Activated CD4-positive, alpha-beta T cell treated with anti-CD3 and anti-CD28 coated beads, Interleukin-2, amount 10 ng/mL, durations not matched to agents 24 days and 14 days (primary cell): ENCODE measurements at regions of chr17 and their contacts with region 1.

Region 1: GRCh38 chr17:61389670-61390478 is 9.8 kb upstream of the TBX2 start:
- DNase-seq: peak; percentile 84
- H3K4me3 Mint-ChIP-seq: no peak overlapping the region
- H3K27ac Mint-ChIP-seq: no peak overlapping the region
- H3K4me1 Mint-ChIP-seq: no peaks in the 10 kb centered on the region
- H3K27me3 Mint-ChIP-seq: peaks cover 12% of the 10 kb centered on the region

Region 2: GRCh38 chr17:60720763-60721531 is 668.9 kb before region 1 on chr17:
- intact Hi-C with region 1: loop called (anchors 1 kb)
- DNase-seq: peak; percentile 82
- H3K4me3 Mint-ChIP-seq: no peak overlapping the region
- H3K27ac Mint-ChIP-seq: no peak overlapping the region
- H3K4me1 Mint-ChIP-seq: no peaks in the 10 kb centered on the region
- H3K27me3 Mint-ChIP-seq: peaks cover 5% of the 10 kb centered on the region

Region 3: GRCh38 chr17:60971515-60972369 is 418.1 kb before region 1 on chr17:
- intact Hi-C with region 1: loop called (anchors 5 kb)
- DNase-seq: peak; percentile 79
- H3K4me3 Mint-ChIP-seq: no peak overlapping the region
- H3K27ac Mint-ChIP-seq: no peak overlapping the region
- H3K4me1 Mint-ChIP-seq: no peaks in the 10 kb centered on the region
- H3K27me3 Mint-ChIP-seq: peaks cover 10% of the 10 kb centered on the region

Region 4: GRCh38 chr17:61002316-61002736 is 387.5 kb before region 1 on chr17:
- intact Hi-C with region 1: loop called (anchors 2 kb)
- DNase-seq: no peak
- H3K4me3 Mint-ChIP-seq: no peak overlapping the region
- H3K27ac Mint-ChIP-seq: no peak overlapping the region
- H3K4me1 Mint-ChIP-seq: no peaks in the 10 kb centered on the region
- H3K27me3 Mint-ChIP-seq: peaks cover 25% of the 10 kb centered on the region